ENCODE measurements at regions of chr17 and their contacts with region 1.

Region 1: GRCh38 chr17:74008196-74008595 is 195.3 kb upstream of the RPL38 start:
- DNase-seq: peak; percentile 75
- H3K4me3 ChIP-seq: no peak overlapping the region
- H3K27ac ChIP-seq: no peak overlapping the region
- H3K4me1 ChIP-seq: peaks cover 0 to 22% of the 10 kb centered on the region in 2 experiments; a peak in 1 of 4 replicates
- H3K27me3 ChIP-seq: no peaks in the 10 kb centered on the region
- CTCF ChIP-seq: no peak
- EP300 ChIP-seq: no peak
- RAD21 ChIP-seq: peak; percentile 53

Region 2: GRCh38 chr17:73976676-73977521 is 31.3 kb before region 1 on chr17:
- CTCF ChIA-PET with region 1: interaction called, 29 read pairs
- POLR2A ChIA-PET with region 1: no interaction called
- DNase-seq: peak; percentile 61
- H3K4me3 ChIP-seq: no peak overlapping the region
- H3K27ac ChIP-seq: no peak overlapping the region
- H3K4me1 ChIP-seq: peaks cover 0 to 29% of the 10 kb centered on the region in 2 experiments; a peak in 1 of 4 replicates
- H3K27me3 ChIP-seq: no peaks in the 10 kb centered on the region
- CTCF ChIP-seq: no peak
- EP300 ChIP-seq: no peak
- RAD21 ChIP-seq: no peak

Region 3: DNA sequence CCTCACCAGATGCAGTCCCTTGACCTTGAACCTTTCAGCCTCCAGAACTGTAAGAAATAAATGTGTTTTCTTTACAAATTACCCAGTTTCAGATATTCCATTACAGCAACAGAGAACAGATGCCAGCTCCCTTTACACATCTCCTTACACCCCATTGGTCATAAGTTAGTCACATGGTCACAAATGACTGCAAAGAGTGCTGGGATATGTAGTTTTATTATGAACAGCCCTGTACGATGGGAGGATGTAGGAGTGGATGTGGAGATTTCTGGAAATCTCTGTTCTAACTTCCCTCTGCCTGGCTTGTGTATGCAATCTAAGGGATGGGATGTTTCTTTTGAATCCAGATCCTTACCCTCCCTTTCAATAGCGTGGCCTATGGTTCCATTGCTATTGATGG is 182.0 kb after region 1 on chr17:
- CTCF ChIA-PET with region 1: no interaction called
- POLR2A ChIA-PET with region 1: no interaction called
- DNase-seq: peak; percentile 90
- H3K4me3 ChIP-seq: no peak overlapping the region
- H3K27ac ChIP-seq: no peak overlapping the region
- H3K4me1 ChIP-seq: peaks cover 0 to 9% of the 10 kb centered on the region in 2 experiments; a peak in 1 of 4 replicates
- H3K27me3 ChIP-seq: peaks cover 12% of the 10 kb centered on the region
- CTCF ChIP-seq: no peak
- EP300 ChIP-seq: no peak
- RAD21 ChIP-seq: no peak